CD8-positive, alpha-beta T cell (primary cell): ENCODE measurements at regions of chr1 and their contacts with region 1.

Region 1: GRCh38 chr1:248686815-248687214 is 15.8 kb downstream of the OR14I1 start:
- DNase-seq: peak in 3 of 9 experiments; percentile 10 to 58 (median 11)
- ATAC-seq: peak; percentile 23
- H3K4me3 ChIP-seq: no peak overlapping the region
- H3K4me3 Mint-ChIP-seq: no peak overlapping the region
- H3K27ac ChIP-seq: no peak overlapping the region
- H3K27ac Mint-ChIP-seq: no peak overlapping the region
- H3K4me1 ChIP-seq: no peaks in the 10 kb centered on the region
- H3K4me1 Mint-ChIP-seq: peaks cover 3% of the 10 kb centered on the region
- H3K27me3 ChIP-seq: no peaks in the 10 kb centered on the region
- H3K27me3 Mint-ChIP-seq: peaks cover 14% of the 10 kb centered on the region
- CTCF ChIP-seq: peak; percentile 37

Region 2: DNA sequence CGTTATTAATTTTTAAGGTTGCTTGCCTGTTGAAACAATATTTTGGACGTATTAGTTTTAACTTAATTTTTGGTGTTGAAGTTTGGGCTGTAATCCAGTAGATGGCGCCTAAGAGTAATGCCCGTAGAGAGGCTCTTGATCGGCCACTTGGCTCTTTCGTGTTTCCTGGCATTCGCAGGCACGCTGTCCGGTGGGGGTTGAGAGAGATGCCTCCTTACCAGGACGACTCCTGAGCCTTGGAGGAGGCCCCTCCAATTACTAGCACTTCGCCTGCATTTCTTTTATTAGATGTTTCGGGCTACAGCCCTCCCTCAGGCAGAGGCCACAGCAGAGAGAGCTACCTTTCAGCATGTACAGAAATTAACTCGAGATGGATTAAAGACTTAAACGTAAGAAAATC is 443.6 kb before region 1 on chr1:
- CTCF ChIA-PET with region 1: interaction called, 3 read pairs
- POLR2A ChIA-PET with region 1: no interaction called
- intact Hi-C with region 1: loop called (anchors 5 to 10 kb)
- DNase-seq: peak in 5 of 9 experiments; percentile 5 to 51 (median 14)
- ATAC-seq: no peak
- H3K4me3 ChIP-seq: no peak overlapping the region
- H3K4me3 Mint-ChIP-seq: peak overlapping the region; percentile 51
- H3K27ac ChIP-seq: no peak overlapping the region
- H3K27ac Mint-ChIP-seq: no peak overlapping the region
- H3K4me1 ChIP-seq: no peaks in the 10 kb centered on the region
- H3K4me1 Mint-ChIP-seq: peaks cover 2% of the 10 kb centered on the region
- H3K27me3 ChIP-seq: no peaks in the 10 kb centered on the region
- H3K27me3 Mint-ChIP-seq: peaks cover 12% of the 10 kb centered on the region
- CTCF ChIP-seq: peak; percentile 72

Region 3: GRCh38 chr1:248703674-248704073 is 16.9 kb after region 1 on chr1:
- CTCF ChIA-PET with region 1: no interaction called
- POLR2A ChIA-PET with region 1: no interaction called
- intact Hi-C with region 1: no loop called
- DNase-seq: no peak
- ATAC-seq: no peak
- H3K4me3 ChIP-seq: no peak overlapping the region
- H3K4me3 Mint-ChIP-seq: no peak overlapping the region
- H3K27ac ChIP-seq: no peak overlapping the region
- H3K27ac Mint-ChIP-seq: no peak overlapping the region
- H3K4me1 ChIP-seq: no peaks in the 10 kb centered on the region
- H3K4me1 Mint-ChIP-seq: no peaks in the 10 kb centered on the region
- H3K27me3 ChIP-seq: no peaks in the 10 kb centered on the region
- H3K27me3 Mint-ChIP-seq: peaks cover 19% of the 10 kb centered on the region
- CTCF ChIP-seq: no peak

Region 4: GRCh38 chr1:248881261-248881660 is 194.4 kb after region 1 on chr1:
- CTCF ChIA-PET with region 1: no interaction called
- POLR2A ChIA-PET with region 1: no interaction called
- intact Hi-C with region 1: no loop called
- DNase-seq: no peak
- ATAC-seq: no peak
- H3K4me3 ChIP-seq: no peak overlapping the region
- H3K4me3 Mint-ChIP-seq: no peak overlapping the region
- H3K27ac ChIP-seq: no peak overlapping the region
- H3K27ac Mint-ChIP-seq: no peak overlapping the region
- H3K4me1 ChIP-seq: no peaks in the 10 kb centered on the region
- H3K4me1 Mint-ChIP-seq: peaks cover 3% of the 10 kb centered on the region
- H3K27me3 ChIP-seq: no peaks in the 10 kb centered on the region
- H3K27me3 Mint-ChIP-seq: peaks cover 2% of the 10 kb centered on the region
- CTCF ChIP-seq: no peak